Lower leg skin (tissue), 4 donors: ENCODE measurements at regions of chr12 and their contacts with region 1.

Region 1: DNA sequence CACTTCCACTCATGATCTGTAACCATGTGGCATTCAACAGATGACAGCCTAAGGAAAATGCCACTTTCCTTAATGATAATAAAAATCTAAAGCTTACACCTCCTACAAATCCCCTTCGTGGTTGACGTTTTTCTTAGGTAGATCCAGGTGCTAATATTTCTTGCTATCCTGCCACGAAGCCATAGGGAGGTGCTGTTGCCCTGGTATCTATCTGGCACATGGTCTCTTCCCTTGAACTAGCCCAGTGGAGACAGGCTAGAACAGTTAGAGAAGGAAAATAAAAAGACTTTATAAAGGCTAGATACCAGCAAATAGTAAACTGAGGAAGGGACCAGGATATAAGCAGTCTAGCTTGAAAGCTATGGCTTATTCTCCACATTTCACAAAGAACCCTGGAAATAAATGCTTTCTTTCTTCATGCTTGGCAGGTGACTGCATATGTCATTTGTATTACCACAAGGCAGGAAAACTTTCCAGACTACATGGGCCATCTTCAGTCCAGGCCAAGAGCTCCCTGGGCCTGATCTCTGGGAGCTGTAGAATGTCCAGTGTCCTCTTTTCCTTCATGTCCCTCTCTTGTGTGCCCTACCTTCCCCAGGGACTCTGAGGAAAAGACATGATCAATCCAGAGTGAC is 15.3 kb downstream of the SPIC start:
- DNase-seq: no peak
- H3K4me3 ChIP-seq: no peak overlapping the region
- CTCF ChIP-seq: no peak
- POLR2A ChIP-seq: no peak

Region 2: DNA sequence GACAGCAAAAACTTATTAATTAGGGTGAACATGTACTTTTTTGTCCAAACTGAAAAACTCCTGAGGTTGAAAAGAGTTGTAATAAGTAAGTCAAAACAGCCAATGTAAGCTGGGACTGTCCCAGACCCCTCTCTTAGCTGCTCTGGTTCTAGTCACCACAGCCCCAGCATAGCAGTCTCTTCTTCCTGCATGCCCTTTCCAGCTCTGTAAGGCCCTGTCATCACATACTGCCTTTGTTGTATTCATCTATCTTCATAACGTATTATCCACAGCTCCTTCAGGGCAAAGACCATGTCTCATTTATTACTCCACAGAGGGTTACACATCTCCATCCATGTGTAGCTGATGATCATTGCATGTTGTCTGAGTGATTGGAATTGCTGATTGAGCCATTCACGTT is 154.0 kb before region 1 on chr12:
- intact Hi-C with region 1: no loop called
- DNase-seq: no peak
- H3K4me3 ChIP-seq: no peak overlapping the region
- CTCF ChIP-seq: no peak
- POLR2A ChIP-seq: no peak

Region 3: DNA sequence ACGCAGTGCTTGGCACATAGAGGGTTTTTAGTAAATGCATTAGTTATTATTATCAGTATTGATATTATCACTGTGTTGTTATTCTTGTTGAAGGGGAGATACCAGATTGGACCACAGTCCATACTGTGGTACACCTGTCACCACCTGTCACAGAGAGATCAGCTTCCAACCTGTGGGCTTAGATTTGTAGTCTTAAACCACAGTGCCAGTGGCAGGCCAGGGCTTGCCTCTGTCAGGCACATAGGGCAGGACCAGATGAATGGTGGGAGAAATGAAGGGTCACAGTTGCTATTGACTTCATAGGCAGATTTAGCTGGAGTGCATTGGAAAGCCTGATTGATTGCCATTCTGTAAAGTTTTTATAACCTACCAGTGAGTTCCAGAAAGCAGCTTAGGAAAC is 118.0 kb before region 1 on chr12:
- intact Hi-C with region 1: no loop called
- DNase-seq: no peak
- H3K4me3 ChIP-seq: no peak overlapping the region
- CTCF ChIP-seq: no peak
- POLR2A ChIP-seq: no peak

Region 4: DNA sequence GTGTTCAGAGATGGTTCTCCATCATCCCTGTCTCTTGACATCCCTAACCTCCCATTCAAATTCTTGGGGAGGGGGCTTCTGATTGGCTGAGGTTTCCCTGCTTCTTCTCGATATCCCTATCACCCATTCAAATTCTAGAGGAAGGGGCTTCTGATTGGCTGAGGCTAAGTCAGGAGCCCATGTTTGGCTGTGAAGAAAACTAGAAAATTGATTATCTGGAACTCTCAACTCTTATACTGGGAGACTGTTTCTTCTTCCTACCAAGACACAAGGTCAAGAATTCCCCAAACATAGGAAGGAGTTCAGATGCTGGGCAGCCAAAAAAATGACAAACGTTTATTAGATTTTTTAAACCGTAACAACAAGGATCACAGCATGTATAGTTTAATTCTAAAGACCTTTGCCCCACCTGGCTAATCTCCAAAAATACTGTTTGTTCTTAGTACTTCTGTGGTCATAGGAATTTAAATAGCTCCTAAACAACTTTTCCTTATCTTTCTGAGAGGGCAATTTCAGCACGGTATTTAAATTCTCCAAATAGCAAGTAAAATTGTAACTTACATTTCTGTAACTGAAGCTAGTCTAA is 11.1 kb after region 1 on chr12:
- intact Hi-C with region 1: loop called (anchors 1 kb)
- DNase-seq: no peak
- H3K4me3 ChIP-seq: no peak overlapping the region
- CTCF ChIP-seq: no peak
- POLR2A ChIP-seq: no peak

Region 5: GRCh38 chr12:101648195-101648594 is 157.8 kb after region 1 on chr12:
- intact Hi-C with region 1: no loop called
- DNase-seq: no peak
- H3K4me3 ChIP-seq: no peak overlapping the region
- CTCF ChIP-seq: no peak
- POLR2A ChIP-seq: no peak

Region 6: DNA sequence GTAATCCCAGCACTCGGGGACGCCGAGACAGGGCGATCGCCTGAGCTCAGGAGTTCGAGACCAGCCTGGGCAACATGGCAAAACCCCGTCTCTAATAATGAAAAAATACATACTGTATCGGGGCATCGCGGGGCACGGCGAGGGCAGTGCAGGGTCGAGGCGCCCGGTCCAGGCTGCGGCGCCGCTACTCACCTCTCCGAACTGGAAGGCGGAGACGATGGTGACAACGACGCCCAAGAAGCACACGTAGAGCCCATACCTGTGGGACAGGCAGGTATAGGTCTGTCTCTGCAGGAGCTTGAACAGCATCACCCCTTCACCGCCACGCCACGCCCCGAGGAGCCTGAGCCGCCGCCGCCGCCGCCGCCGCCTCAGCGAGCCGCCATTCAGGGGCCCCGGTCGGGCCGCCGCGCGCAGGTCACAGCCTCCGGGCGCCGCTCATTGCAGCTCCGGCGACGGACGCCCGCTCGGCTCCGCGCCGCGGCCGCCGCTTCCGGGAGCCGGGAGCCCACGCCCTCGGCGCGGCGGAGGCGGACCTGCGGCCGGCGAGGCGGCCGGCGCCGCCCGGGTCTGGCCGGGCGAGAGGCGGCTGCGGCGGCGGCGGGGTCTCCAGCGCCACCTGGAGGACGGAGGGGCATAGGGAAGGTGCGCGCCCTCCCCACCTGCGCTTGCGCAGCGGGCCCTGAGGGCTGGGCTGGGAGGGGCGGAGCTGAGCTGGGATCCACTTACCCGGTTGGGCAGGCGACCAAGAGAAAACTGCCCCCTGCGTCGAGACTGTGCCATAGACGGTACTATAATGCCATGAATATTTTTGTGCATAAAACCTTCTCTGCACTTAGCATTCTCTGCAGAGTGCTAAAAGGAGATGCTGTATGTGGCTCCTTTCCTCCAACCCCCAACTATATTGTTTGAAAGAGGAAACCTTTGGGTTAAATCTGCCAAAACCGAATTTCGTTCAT is 340.2 kb after region 1 on chr12 and contains the start of gene GNPTAB:
- intact Hi-C with region 1: loop called (anchors 10 kb)
- DNase-seq: peak; percentile 89 to 97
- H3K4me3 ChIP-seq: peak within 1 kb of the TSS; percentile 91
- CTCF ChIP-seq: no peak
- POLR2A ChIP-seq: no peak
- total RNA-seq, gene GNPTAB: 24.3 to 45.9 (median 32.6) TPM